PC-3 (cell line): ENCODE measurements at regions of chr4 and their contacts with region 1.

Region 1: GRCh38 chr4:166594326-166594946 is 639.9 kb downstream of the SPOCK3 start:
- DNase-seq: peak; percentile 78
- ATAC-seq: peak; percentile 95
- H3K4me3 ChIP-seq: no peak overlapping the region
- H3K27ac ChIP-seq: no peak overlapping the region
- H3K4me1 ChIP-seq: no peaks in the 10 kb centered on the region
- H3K27me3 ChIP-seq: no peaks in the 10 kb centered on the region
- CTCF ChIP-seq: peak; percentile 82

Region 2: DNA sequence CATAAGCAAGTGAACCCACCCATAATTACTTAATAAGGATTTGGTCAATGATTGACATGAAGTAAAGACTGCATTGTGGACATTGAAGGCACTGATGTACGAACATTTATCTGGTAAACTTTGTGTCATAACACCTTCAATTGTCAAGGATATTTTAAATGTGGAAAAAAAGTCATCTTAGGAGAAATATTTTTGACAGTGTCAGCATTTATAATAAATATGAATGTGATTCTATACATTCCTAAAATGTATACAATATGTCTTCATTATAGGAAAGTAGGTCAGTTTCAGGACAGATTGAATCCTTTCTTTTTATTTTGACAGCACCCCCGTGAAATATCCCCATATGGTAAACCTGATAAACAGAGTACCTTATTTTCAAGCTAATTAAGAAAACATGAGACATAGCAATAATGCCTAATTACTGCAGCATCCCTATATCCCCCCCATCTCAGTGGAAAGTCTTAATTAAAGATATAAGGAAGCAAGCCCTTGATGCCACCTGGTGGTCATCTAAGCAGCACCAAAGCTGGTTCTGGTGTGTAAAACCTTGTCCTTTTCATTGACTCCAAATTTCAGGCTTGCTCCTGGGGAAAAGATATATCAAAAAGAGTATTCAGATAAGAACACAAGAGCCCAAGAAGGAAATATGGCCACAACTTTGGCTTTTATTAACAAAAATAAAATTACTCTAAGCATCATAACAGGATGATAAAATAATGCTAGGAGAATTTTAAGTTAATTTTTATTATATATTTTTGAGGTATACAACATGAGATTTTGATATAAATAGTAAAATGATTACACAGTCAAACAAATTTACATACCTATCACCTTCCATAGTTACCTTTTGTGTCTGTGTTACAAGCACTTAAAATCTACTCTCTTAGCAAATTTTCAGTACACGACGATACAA is 341.7 kb before region 1 on chr4:
- CTCF ChIA-PET with region 1: no interaction called
- POLR2A ChIA-PET with region 1: no interaction called
- intact Hi-C with region 1: loop called (anchors 1 kb)
- DNase-seq: peak; percentile 51
- ATAC-seq: peak; percentile 45; the same call in 1 of the 2 replicates
- H3K4me3 ChIP-seq: no peak overlapping the region
- H3K27ac ChIP-seq: no peak overlapping the region
- H3K4me1 ChIP-seq: no peaks in the 10 kb centered on the region
- H3K27me3 ChIP-seq: no peaks in the 10 kb centered on the region
- CTCF ChIP-seq: peak; percentile 73

Region 3: GRCh38 chr4:166435449-166435848 is 159.0 kb before region 1 on chr4:
- CTCF ChIA-PET with region 1: no interaction called
- POLR2A ChIA-PET with region 1: no interaction called
- intact Hi-C with region 1: no loop called
- DNase-seq: peak; percentile 94
- ATAC-seq: peak; percentile 86
- H3K4me3 ChIP-seq: no peak overlapping the region
- H3K27ac ChIP-seq: peak overlapping the region; percentile 99
- H3K4me1 ChIP-seq: peaks cover 66% of the 10 kb centered on the region
- H3K27me3 ChIP-seq: no peaks in the 10 kb centered on the region
- CTCF ChIP-seq: no peak

Region 4: GRCh38 chr4:166741742-166742141 is 147.3 kb after region 1 on chr4:
- CTCF ChIA-PET with region 1: no interaction called
- POLR2A ChIA-PET with region 1: no interaction called
- intact Hi-C with region 1: no loop called
- DNase-seq: no peak
- ATAC-seq: no peak
- H3K4me3 ChIP-seq: no peak overlapping the region
- H3K27ac ChIP-seq: no peak overlapping the region
- H3K4me1 ChIP-seq: no peaks in the 10 kb centered on the region
- H3K27me3 ChIP-seq: no peaks in the 10 kb centered on the region
- CTCF ChIP-seq: no peak

Region 5: DNA sequence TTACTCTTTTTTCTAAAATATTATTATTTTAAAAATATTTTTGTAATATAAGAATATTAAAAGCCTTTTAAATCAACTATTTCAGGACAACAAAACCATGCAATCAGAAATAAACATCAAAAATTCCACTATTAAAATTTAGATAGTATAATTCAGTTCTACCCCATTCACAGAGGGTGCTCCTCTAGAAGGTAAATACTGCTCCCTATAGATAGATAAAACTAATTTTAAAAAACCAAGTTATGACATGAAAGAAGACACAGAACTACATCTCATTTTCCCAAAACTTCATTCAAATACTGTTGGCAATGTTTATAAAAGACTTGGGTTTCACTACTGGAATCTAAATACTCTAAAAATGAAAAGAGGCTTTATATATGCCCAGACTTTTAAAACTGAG is 420.5 kb after region 1 on chr4:
- CTCF ChIA-PET with region 1: no interaction called
- POLR2A ChIA-PET with region 1: no interaction called
- intact Hi-C with region 1: loop called (anchors 5 kb)
- DNase-seq: no peak
- ATAC-seq: no peak
- H3K4me3 ChIP-seq: no peak overlapping the region
- H3K27ac ChIP-seq: no peak overlapping the region
- H3K4me1 ChIP-seq: no peaks in the 10 kb centered on the region
- H3K27me3 ChIP-seq: no peaks in the 10 kb centered on the region
- CTCF ChIP-seq: peak; percentile 32; the same call in 1 of the 2 replicates